Transverse colon (tissue), 4 donors: ENCODE measurements at regions of chr11 and their contacts with region 1.

Region 1: GRCh38 chr11:61332797-61333549 is at the starts of genes DDB1 and TKFC:
- DNase-seq: peak; percentile 97
- H3K4me3 ChIP-seq: peak within 1 kb of the TSS; percentile 76 to 99 (median 97)
- H3K27ac ChIP-seq: peak within 1 kb of the TSS; percentile 91 to 97 (median 96)
- H3K4me1 ChIP-seq: peaks cover 16 to 40% (median 25%) of the 10 kb centered on the region in 4 donors
- H3K27me3 ChIP-seq: no peaks in the 10 kb centered on the region
- CTCF ChIP-seq: no peak
- EP300 ChIP-seq: no peak
- POLR2A ChIP-seq: peak; percentile 76
- total RNA-seq, gene DDB1: 105 to 127 (median 123) TPM
- total RNA-seq, gene TKFC: 32.9 to 103 (median 40.4) TPM

Region 2: GRCh38 chr11:60841797-60842667 is 490.9 kb before region 1 on chr11 and contains the start of gene CCDC86:
- in situ Hi-C with region 1: loop called in 1 of 4 experiments (anchors 25 kb)
- intact Hi-C with region 1: no loop called
- DNase-seq: peak; percentile 97
- H3K4me3 ChIP-seq: peak within 1 kb of the TSS; percentile 59 to 96 (median 63)
- H3K27ac ChIP-seq: peak within 1 kb of the TSS; percentile 69 to 85 (median 80)
- H3K4me1 ChIP-seq: peaks cover 19 to 39% (median 32%) of the 10 kb centered on the region in 4 donors
- H3K27me3 ChIP-seq: no peaks in the 10 kb centered on the region
- CTCF ChIP-seq: no peak
- EP300 ChIP-seq: peak; percentile 36
- POLR2A ChIP-seq: peak; percentile 54
- total RNA-seq, gene CCDC86: 1.9 to 9.1 (median 5.5) TPM

Region 3: DNA sequence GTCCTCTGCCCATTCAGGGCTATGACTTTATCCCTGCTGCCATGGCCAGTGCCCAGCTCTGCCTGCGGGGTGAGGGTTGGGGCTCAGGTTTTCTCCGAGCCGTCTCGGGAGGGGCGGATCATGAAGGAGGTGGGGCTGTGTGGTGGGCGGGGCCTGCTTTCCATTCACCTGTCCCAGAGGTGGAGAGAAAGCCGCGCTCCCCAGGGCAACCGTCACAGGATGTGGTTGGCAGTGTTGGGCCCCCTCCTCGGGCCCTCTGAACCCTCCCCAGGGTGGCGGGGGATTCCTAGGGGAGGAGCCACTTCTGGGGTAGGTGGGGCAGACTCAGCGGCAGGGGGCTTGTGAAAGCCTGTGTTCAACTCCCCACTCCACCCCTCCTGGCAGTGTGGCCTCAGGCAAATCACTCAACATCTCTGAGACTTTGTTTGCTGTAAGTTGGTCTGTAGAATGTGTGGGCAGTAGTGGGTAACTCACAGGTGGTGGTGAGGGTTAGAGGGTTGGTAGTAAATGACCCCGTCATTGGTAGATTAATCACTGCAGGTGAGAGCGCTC is 311.2 kb before region 1 on chr11:
- in situ Hi-C with region 1: no loop called
- intact Hi-C with region 1: no loop called
- DNase-seq: peak; percentile 75
- H3K4me3 ChIP-seq: no peak overlapping the region
- H3K27ac ChIP-seq: no peak overlapping the region
- H3K4me1 ChIP-seq: peaks cover 0 to 13% (median 0%) of the 10 kb centered on the region in 4 donors
- H3K27me3 ChIP-seq: peaks cover 34% of the 10 kb centered on the region
- CTCF ChIP-seq: no peak
- EP300 ChIP-seq: no peak
- POLR2A ChIP-seq: no peak

Region 4: DNA sequence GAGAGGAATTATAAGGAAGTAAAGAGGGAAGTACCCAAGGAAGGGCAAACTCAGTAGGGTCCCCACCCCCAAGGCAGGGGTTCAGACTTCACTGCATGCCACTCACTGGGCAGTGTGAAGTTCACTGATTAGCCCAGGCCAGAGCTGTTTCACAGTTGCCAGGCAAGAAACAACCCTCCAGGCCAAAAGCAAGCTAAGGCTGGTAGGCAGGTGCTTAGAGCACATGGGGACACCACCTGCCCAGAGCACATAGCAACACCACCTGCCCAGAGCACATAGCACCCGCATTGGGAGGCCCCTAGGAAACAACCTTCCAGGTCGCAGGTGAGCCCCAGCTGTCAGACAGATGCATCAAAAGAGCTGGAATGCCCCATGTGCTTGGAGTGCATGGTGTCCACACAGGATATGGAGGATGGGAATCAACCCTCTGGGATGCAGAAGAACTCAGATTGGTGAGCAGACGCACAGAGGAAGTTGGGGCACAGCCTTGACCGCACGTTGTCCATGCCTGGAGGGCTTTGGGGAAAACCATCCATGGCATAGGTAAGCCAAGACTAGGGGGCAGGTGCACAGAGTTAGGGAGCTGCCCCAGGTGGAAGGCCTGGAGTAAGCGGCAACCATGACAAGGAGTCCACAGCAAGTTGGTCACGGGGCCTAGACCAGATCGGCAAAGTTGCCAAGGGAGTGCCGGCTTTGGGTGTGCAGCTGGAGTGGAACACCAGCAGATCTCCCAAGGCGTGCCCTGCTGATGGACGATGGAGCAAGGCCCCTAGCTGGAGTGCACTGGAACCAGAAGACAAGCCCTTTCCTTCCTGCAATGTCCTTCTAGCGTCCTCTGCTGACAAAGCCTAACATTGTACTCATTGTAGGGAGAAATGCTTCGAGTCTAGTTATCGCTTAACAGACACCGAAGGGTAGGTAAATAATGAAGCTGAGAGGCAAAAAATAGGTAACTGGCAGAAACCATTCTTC is 51.6 kb after region 1 on chr11:
- in situ Hi-C with region 1: loop called (anchors 5 to 10 kb)
- intact Hi-C with region 1: loop called (anchors 2 kb)
- DNase-seq: no peak
- H3K4me3 ChIP-seq: no peak overlapping the region
- H3K27ac ChIP-seq: no peak overlapping the region
- H3K4me1 ChIP-seq: peaks cover 0 to 23% (median 7%) of the 10 kb centered on the region in 4 donors
- H3K27me3 ChIP-seq: no peaks in the 10 kb centered on the region
- CTCF ChIP-seq: no peak
- EP300 ChIP-seq: no peak
- POLR2A ChIP-seq: no peak

Region 5: GRCh38 chr11:61509043-61510029 is 176.4 kb after region 1 on chr11:
- in situ Hi-C with region 1: no loop called
- intact Hi-C with region 1: no loop called
- DNase-seq: peak; percentile 71
- H3K4me3 ChIP-seq: peak overlapping the region in 2 of 4 donors; percentile 24 to 44
- H3K27ac ChIP-seq: peak overlapping the region; percentile 55 to 78 (median 72)
- H3K4me1 ChIP-seq: peaks cover 14 to 22% (median 20%) of the 10 kb centered on the region in 4 donors
- H3K27me3 ChIP-seq: peaks cover 43% of the 10 kb centered on the region
- CTCF ChIP-seq: peak; percentile 35 to 73 (median 50)
- EP300 ChIP-seq: no peak
- POLR2A ChIP-seq: no peak